ENCODE measurements at regions of chr5 and their contacts with region 1.

Region 1: GRCh38 chr5:149381987-149382340 is 2.9 kb upstream of the IL17B start:
- DNase-seq: peak; percentile 37 to 61 (median 55)
- H3K4me3 ChIP-seq: no peak overlapping the region
- H3K4me3 Mint-ChIP-seq: no peak overlapping the region
- H3K27ac ChIP-seq: no peak overlapping the region
- H3K27ac Mint-ChIP-seq: peak overlapping the region in 1 of 7 donors; percentile 44
- H3K4me1 ChIP-seq: no peaks in the 10 kb centered on the region
- H3K4me1 Mint-ChIP-seq: peaks cover 4% of the 10 kb centered on the region
- H3K27me3 ChIP-seq: no peaks in the 10 kb centered on the region
- H3K27me3 Mint-ChIP-seq: peaks cover 1 to 3% (median 1%) of the 10 kb centered on the region in 3 donors
- CTCF ChIP-seq: peak; percentile 88

Region 2: DNA sequence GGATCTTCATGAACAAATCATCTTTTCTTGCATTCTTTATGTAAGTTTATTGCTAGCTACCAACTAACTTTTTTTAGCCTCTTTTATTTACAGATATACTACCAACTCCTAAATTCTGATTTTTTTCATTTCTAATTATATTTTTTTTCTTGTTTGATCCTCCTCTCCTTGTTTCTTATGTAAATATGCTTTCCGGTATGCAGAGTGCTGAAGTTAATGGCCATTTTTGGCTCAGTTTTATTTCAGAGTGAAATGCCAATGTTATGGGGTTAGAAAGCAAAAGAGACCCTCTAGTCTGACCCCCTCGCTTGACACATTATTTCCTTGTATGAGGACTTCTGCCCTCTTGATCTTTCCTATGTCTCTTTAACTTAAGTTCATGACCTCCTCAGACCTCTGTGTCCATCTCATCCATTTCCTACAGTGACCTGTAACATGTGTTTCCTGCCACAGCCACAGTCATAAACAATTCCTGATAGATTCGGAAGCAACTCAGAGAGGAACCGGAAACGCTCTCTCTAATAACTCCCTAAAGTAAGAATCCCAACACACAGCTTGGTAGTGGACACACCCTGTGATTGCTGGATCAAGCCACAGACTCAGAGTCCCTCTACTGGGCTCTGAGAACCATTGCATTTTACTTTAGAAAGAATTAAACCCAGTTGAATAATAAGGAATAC is 153.2 kb before region 1 on chr5:
- intact Hi-C with region 1: no loop called
- DNase-seq: peak; percentile 14 to 19 (median 19)
- H3K4me3 ChIP-seq: no peak overlapping the region
- H3K4me3 Mint-ChIP-seq: no peak overlapping the region
- H3K27ac ChIP-seq: no peak overlapping the region
- H3K27ac Mint-ChIP-seq: no peak overlapping the region
- H3K4me1 ChIP-seq: peaks cover 0 to 7% of the 10 kb centered on the region in 2 donors
- H3K4me1 Mint-ChIP-seq: peaks cover 8% of the 10 kb centered on the region
- H3K27me3 ChIP-seq: no peaks in the 10 kb centered on the region
- H3K27me3 Mint-ChIP-seq: peaks cover 4 to 7% (median 6%) of the 10 kb centered on the region in 3 donors
- CTCF ChIP-seq: peak; percentile 47

Region 3: GRCh38 chr5:149367249-149367971 is 14.6 kb before region 1 on chr5:
- intact Hi-C with region 1: no loop called
- DNase-seq: peak; percentile 22 to 41 (median 41)
- H3K4me3 ChIP-seq: no peak overlapping the region
- H3K4me3 Mint-ChIP-seq: no peak overlapping the region
- H3K27ac ChIP-seq: no peak overlapping the region
- H3K27ac Mint-ChIP-seq: peak overlapping the region in 1 of 7 donors; percentile 72
- H3K4me1 ChIP-seq: no peaks in the 10 kb centered on the region
- H3K4me1 Mint-ChIP-seq: peaks cover 13% of the 10 kb centered on the region
- H3K27me3 ChIP-seq: no peaks in the 10 kb centered on the region
- H3K27me3 Mint-ChIP-seq: peaks cover 0 to 4% (median 2%) of the 10 kb centered on the region in 3 donors
- CTCF ChIP-seq: peak; percentile 79

Region 4: GRCh38 chr5:149504677-149505076 is 122.7 kb after region 1 on chr5:
- intact Hi-C with region 1: no loop called
- DNase-seq: no peak
- H3K4me3 ChIP-seq: no peak overlapping the region
- H3K4me3 Mint-ChIP-seq: no peak overlapping the region
- H3K27ac ChIP-seq: no peak overlapping the region
- H3K27ac Mint-ChIP-seq: no peak overlapping the region
- H3K4me1 ChIP-seq: no peaks in the 10 kb centered on the region
- H3K4me1 Mint-ChIP-seq: no peaks in the 10 kb centered on the region
- H3K27me3 ChIP-seq: no peaks in the 10 kb centered on the region
- H3K27me3 Mint-ChIP-seq: peaks cover 0 to 1% (median 0%) of the 10 kb centered on the region in 3 donors
- CTCF ChIP-seq: no peak

Region 5: GRCh38 chr5:149561848-149562247 is 179.9 kb after region 1 on chr5:
- intact Hi-C with region 1: loop called (anchors 5 kb)
- DNase-seq: peak in 1 of 3 donors; percentile 9
- H3K4me3 ChIP-seq: no peak overlapping the region
- H3K4me3 Mint-ChIP-seq: no peak overlapping the region
- H3K27ac ChIP-seq: no peak overlapping the region
- H3K27ac Mint-ChIP-seq: no peak overlapping the region
- H3K4me1 ChIP-seq: peaks cover 7 to 14% of the 10 kb centered on the region in 2 donors
- H3K4me1 Mint-ChIP-seq: peaks cover 15% of the 10 kb centered on the region
- H3K27me3 ChIP-seq: no peaks in the 10 kb centered on the region
- H3K27me3 Mint-ChIP-seq: peaks cover 0 to 3% (median 0%) of the 10 kb centered on the region in 3 donors
- CTCF ChIP-seq: no peak

Region 6: DNA sequence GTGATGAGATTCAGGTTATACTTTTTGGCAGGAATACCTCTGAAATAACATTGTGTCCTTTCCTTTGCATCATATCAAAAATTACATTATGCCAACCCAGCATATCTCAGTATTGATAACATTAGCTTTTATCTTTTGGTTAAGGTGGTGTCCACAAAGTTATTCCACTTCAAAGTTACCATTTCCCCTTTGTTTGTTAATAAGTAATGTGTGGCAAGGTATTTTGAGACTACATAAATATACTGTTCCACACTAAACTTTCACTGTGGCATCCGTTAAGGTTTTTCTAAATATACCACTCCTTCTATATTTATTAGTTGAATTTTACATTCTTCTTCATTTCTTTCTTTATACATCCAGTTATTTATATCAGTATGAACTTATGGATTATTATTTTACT is 185.3 kb after region 1 on chr5:
- intact Hi-C with region 1: loop called (anchors 5 kb)
- DNase-seq: no peak
- H3K4me3 ChIP-seq: no peak overlapping the region
- H3K4me3 Mint-ChIP-seq: no peak overlapping the region
- H3K27ac ChIP-seq: no peak overlapping the region
- H3K27ac Mint-ChIP-seq: no peak overlapping the region
- H3K4me1 ChIP-seq: no peaks in the 10 kb centered on the region
- H3K4me1 Mint-ChIP-seq: no peaks in the 10 kb centered on the region
- H3K27me3 ChIP-seq: no peaks in the 10 kb centered on the region
- H3K27me3 Mint-ChIP-seq: peaks cover 0 to 3% (median 1%) of the 10 kb centered on the region in 3 donors
- CTCF ChIP-seq: no peak

Region 7: GRCh38 chr5:149796030-149796429 is 414.1 kb after region 1 on chr5:
- intact Hi-C with region 1: no loop called
- DNase-seq: no peak
- H3K4me3 ChIP-seq: no peak overlapping the region
- H3K4me3 Mint-ChIP-seq: no peak overlapping the region
- H3K27ac ChIP-seq: no peak overlapping the region
- H3K27ac Mint-ChIP-seq: peak overlapping the region in 2 of 7 donors; percentile 1 to 15
- H3K4me1 ChIP-seq: peaks cover 0 to 9% of the 10 kb centered on the region in 2 donors
- H3K4me1 Mint-ChIP-seq: peaks cover 34% of the 10 kb centered on the region
- H3K27me3 ChIP-seq: no peaks in the 10 kb centered on the region
- H3K27me3 Mint-ChIP-seq: peaks cover 0 to 3% (median 0%) of the 10 kb centered on the region in 3 donors
- CTCF ChIP-seq: no peak

Measured in CD14-positive monocyte (primary cell).